ENCODE measurements at regions of chr1 and their contacts with region 1.

Region 1: DNA sequence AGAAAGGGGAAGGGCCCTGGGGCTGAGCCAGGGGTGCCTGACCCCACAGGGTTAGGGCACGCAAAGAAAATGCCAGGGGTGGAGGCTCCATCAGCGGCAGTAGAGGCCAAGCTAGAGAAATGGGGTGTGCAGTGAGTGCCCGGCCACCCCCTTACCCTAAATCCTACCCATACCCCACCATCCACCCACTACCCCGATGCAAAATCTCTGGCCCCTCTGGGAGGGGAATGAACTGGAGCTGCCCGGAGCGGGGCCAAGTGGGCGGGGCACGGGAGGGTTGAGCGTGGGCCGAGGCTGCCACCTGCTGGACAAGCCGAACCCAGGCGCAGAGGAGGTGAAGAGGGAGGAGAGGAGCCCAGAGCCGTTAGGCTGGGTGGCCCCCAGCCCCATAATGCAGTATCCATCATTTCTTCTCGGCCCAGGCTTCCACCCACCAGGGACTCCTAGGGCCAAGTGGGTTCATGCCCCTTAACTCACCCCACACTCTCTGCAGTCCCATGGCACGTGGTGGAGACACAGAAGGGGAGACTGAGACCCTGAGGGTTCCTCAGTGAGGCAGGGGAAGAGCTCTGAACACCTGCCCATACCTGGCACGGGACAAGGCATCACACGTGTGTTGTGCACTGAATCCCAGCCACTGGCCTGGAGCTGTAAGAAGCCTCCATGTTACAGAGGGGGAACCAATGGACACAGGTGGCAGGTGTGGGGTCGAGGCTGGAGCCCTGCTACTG is 1.4 kb upstream of the C1QC start:
- DNase-seq: peak; percentile 71 to 84
- H3K4me3 ChIP-seq: no peak overlapping the region
- H3K4me3 Mint-ChIP-seq: no peak overlapping the region
- H3K27ac Mint-ChIP-seq: no peak overlapping the region
- H3K4me1 ChIP-seq: no peaks in the 10 kb centered on the region
- H3K4me1 Mint-ChIP-seq: no peaks in the 10 kb centered on the region
- H3K27me3 ChIP-seq: no peaks in the 10 kb centered on the region
- H3K27me3 Mint-ChIP-seq: peaks cover 6% of the 10 kb centered on the region
- CTCF ChIP-seq: peak; percentile 92 to 94

Region 2: DNA sequence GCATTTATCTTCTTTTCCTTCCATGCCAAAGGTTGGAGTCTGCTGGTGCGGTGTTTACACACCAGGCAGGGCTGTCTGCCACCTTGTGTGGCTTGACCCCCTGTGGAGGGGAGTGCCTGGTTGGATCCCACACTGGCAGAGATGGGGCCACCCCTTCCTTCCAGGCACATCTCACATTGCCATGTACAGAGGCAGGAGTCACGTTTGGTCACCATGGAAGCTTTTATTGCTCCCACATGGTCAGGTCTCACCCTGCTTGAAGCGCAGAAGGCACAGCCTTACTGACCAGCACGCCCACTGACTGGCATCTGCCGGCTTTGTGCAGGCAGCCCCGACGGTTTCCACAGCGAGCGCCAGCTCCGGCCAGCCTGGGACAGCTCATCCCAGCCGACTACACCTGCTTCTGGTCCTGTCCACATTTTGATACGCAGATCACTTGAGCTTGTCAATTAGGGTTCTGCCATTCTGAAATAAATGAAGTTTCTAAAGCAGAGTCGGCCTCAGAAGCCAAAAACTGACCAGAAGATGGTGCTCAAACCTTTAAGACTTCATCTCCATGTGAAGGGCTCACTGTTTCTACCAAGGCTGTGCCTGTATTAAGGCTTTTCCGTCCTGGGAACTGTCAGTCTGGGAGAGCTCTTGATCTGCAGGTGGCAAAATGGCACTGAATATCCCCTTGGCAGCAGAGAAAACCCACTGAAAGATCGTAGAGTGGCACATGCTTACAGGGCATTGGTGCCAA is 114.3 kb before region 1 on chr1:
- CTCF ChIA-PET with region 1: interaction called, 7 read pairs
- POLR2A ChIA-PET with region 1: no interaction called
- intact Hi-C with region 1: loop called (anchors 1 kb)
- DNase-seq: no peak
- H3K4me3 ChIP-seq: no peak overlapping the region
- H3K4me3 Mint-ChIP-seq: no peak overlapping the region
- H3K27ac Mint-ChIP-seq: no peak overlapping the region
- H3K4me1 ChIP-seq: no peaks in the 10 kb centered on the region
- H3K4me1 Mint-ChIP-seq: no peaks in the 10 kb centered on the region
- H3K27me3 ChIP-seq: no peaks in the 10 kb centered on the region
- H3K27me3 Mint-ChIP-seq: no peaks in the 10 kb centered on the region
- CTCF ChIP-seq: no peak

Region 3: GRCh38 chr1:22540337-22540736 is 101.7 kb before region 1 on chr1:
- CTCF ChIA-PET with region 1: interaction called, 6 read pairs
- POLR2A ChIA-PET with region 1: interaction called, 5 read pairs
- intact Hi-C with region 1: loop called (anchors 5 kb)
- DNase-seq: no peak
- H3K4me3 ChIP-seq: no peak overlapping the region
- H3K4me3 Mint-ChIP-seq: no peak overlapping the region
- H3K27ac Mint-ChIP-seq: no peak overlapping the region
- H3K4me1 ChIP-seq: no peaks in the 10 kb centered on the region
- H3K4me1 Mint-ChIP-seq: no peaks in the 10 kb centered on the region
- H3K27me3 ChIP-seq: no peaks in the 10 kb centered on the region
- H3K27me3 Mint-ChIP-seq: no peaks in the 10 kb centered on the region
- CTCF ChIP-seq: no peak